Mammary epithelial cell (primary cell): ENCODE measurements at regions of chr21 and their contacts with region 1.

Region 1: GRCh38 chr21:34745557-34746255 is 76.9 kb downstream of the CLIC6 start:
- DNase-seq: peak; percentile 63
- H3K4me3 ChIP-seq: no peak overlapping the region
- H3K27ac ChIP-seq: no peak overlapping the region
- H3K4me1 ChIP-seq: peaks cover 31% of the 10 kb centered on the region
- H3K27me3 ChIP-seq: no peaks in the 10 kb centered on the region
- CTCF ChIP-seq: peak; percentile 84 to 96

Region 2: DNA sequence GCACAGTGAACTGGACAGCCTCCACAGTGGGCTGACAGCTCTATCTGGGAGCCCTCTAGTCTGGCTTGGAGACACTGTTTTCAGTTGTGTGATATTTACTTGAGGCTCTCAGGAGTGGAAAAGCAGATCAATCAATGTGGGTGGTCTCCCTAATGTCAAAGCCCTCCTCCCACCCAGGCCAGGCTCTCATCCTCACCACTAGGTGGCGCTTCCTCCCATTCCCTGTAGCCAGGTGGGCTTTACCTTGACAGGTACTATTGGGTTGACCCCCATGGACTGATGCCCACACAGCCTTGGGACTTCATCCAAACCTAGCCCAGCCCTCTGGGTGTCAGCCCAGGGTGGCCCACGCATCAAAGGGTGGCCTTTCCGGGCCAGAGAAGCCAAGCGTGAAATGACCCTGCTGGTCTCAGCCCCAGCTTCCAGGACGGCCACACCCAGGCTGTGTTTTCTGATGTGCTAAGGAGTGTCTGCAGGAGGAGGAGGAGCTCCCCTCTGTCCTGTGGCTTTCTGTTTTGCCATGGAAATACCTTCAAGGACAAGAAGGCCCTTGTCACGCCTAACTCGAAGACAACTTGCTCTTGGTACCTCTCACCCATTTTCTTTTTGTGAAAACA is 22.9 kb before region 1 on chr21:
- CTCF ChIA-PET with region 1: no interaction called
- dilution Hi-C with region 1: no loop called
- in situ Hi-C with region 1: no loop called
- intact Hi-C with region 1: loop called (anchors 1 kb)
- DNase-seq: no peak
- H3K4me3 ChIP-seq: no peak overlapping the region
- H3K27ac ChIP-seq: no peak overlapping the region
- H3K4me1 ChIP-seq: no peaks in the 10 kb centered on the region
- H3K27me3 ChIP-seq: no peaks in the 10 kb centered on the region
- CTCF ChIP-seq: peak; percentile 59 to 80

Region 3: DNA sequence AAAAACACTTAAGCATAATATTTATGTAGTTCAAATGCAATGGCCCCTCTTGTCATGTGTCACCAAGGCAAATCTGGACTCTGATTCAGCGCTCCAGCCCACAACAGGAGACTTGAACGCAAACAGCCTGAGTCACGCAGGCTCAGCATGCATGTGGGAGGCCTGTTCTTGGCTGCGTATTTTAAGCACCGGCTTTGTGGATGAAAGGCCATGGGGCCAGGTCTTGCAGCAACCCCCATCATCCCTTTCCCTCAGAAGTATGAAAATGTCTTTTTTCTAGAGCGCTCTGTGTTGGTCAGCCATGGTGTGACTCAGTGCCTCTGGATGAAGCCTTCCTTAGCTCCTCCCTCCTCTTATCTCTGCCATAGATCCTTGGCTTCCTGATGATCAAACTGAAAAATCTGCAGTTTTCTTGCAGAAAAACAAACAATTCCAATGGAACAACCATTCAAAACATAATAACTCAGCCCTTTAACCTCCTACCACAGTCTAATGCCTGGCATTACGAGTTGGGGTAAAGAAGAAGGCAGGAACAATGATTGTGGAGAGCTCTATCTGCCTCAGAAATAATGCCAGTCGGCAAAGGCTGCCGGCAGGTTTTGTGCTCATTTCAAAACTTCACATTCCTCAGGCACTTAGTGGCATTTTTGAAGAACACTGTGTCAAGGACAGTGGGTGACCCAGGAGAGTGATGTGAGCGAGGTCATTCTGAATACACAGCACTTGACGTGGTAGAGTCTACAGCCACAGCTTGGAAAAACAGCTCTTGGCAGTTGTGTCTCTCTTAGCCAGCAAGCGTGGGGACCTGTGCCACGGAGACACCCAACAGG is 90.6 kb after region 1 on chr21:
- CTCF ChIA-PET with region 1: no interaction called
- dilution Hi-C with region 1: no loop called
- in situ Hi-C with region 1: no loop called
- intact Hi-C with region 1: loop called (anchors 2 kb)
- DNase-seq: peak; percentile 94
- H3K4me3 ChIP-seq: no peak overlapping the region
- H3K27ac ChIP-seq: peak overlapping the region; percentile 33
- H3K4me1 ChIP-seq: peaks cover 44% of the 10 kb centered on the region
- H3K27me3 ChIP-seq: no peaks in the 10 kb centered on the region
- CTCF ChIP-seq: no peak

Region 4: DNA sequence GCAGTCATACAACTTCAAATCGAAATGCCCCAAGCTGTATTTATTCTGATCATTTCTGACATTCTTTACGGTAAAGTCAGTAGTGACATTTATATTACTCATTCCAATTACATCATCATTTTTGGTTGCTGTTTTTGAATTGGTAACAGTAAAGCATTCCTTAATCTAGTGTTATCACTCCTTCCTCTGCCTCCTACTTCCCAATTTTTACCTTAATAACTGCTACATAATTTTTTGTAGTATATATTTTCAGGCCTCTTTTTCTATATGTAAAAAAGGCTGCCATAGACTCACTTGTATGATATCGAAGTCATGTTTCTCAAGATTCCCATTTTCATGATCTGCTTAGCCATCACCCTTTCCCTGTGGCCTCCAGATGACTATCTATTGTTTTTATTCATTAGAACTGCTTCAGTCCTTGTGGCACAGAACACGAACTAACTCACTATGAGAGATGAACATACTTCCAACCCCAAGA is 136.2 kb after region 1 on chr21:
- CTCF ChIA-PET with region 1: no interaction called
- dilution Hi-C with region 1: no loop called
- in situ Hi-C with region 1: no loop called
- intact Hi-C with region 1: loop called (anchors 1 kb)
- DNase-seq: peak; percentile 82
- H3K4me3 ChIP-seq: peak overlapping the region; percentile 89 to 99 (median 94)
- H3K27ac ChIP-seq: peak overlapping the region; percentile 97
- H3K4me1 ChIP-seq: peaks cover 32% of the 10 kb centered on the region
- H3K27me3 ChIP-seq: no peaks in the 10 kb centered on the region
- CTCF ChIP-seq: no peak

Region 5: GRCh38 chr21:35616090-35616489 is 870.4 kb after region 1 on chr21:
- CTCF ChIA-PET with region 1: interaction called, 4 read pairs
- dilution Hi-C with region 1: no loop called
- in situ Hi-C with region 1: no loop called
- intact Hi-C with region 1: loop called (anchors 2 kb)
- DNase-seq: peak; percentile 40
- H3K4me3 ChIP-seq: no peak overlapping the region
- H3K27ac ChIP-seq: peak overlapping the region; percentile 25
- H3K4me1 ChIP-seq: peaks cover 54% of the 10 kb centered on the region
- H3K27me3 ChIP-seq: no peaks in the 10 kb centered on the region
- CTCF ChIP-seq: peak; percentile 50 to 59

Region 6: GRCh38 chr21:36028127-36029069 is 1282.7 kb after region 1 on chr21:
- CTCF ChIA-PET with region 1: no interaction called
- dilution Hi-C with region 1: no loop called
- in situ Hi-C with region 1: no loop called
- intact Hi-C with region 1: loop called (anchors 1 kb)
- DNase-seq: peak; percentile 70
- H3K4me3 ChIP-seq: no peak overlapping the region
- H3K27ac ChIP-seq: no peak overlapping the region
- H3K4me1 ChIP-seq: peaks cover 11% of the 10 kb centered on the region
- H3K27me3 ChIP-seq: no peaks in the 10 kb centered on the region
- CTCF ChIP-seq: peak; percentile 96 to 97